Right ventricle myocardium superior (tissue), 1 donor: ENCODE measurements at regions of chr11 and their contacts with region 1.

Region 1: GRCh38 chr11:64317957-64318693 is at the start of gene PRDX5:
- DNase-seq: peak; percentile 98
- ATAC-seq: peak; percentile 92
- total RNA-seq, gene PRDX5: 417 TPM

Region 2: GRCh38 chr11:64102005-64102738 is 216.0 kb before region 1 on chr11:
- intact Hi-C with region 1: no loop called
- DNase-seq: no peak
- ATAC-seq: no peak

Region 3: DNA sequence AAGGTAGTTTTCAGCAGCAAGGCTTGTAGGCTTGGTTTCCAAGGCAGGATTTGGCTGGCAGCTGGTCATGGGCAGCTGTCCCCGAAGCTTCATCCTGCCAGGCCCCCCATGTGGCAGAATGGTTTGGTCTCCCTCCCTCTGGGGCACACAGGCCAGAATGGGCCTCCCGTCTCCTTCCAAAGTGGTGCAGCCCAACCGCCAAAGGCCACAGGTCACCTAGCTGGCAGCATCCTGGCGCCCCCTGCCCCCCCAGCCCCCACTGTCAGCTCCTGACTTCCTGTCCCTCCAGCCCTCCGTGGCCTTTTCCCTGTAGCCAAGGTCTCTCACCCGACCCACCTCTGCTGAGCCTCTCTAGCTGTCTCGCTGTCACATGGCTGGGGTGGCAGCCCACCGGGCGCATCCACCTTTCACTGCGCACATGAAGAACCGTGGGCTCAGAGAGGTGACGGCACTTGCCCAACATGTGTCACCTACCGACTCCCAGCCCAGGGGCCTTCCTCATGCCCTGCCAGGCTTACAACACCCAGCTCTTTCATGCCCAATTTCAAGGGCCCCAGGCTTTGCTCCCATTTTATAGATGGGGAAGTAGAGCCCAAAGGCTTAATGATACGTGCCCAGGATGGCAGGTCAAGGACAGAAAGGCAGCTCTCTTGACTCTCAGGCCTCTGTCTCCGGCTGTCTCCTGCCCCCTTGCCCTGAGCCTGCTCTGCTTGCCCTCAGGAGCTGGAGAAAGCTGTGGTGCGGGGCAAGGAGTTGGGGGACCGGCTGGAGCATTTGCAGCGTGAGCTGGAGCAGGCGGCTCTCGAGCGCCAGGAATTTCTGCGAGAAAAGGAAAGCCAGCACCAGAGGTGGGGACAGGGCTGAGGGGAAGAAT is 30.7 kb after region 1 on chr11:
- intact Hi-C with region 1: no loop called
- DNase-seq: no peak
- ATAC-seq: no peak

Region 4: GRCh38 chr11:64358907-64359711 is 41.0 kb after region 1 on chr11 and contains the start of gene RPS6KA4:
- intact Hi-C with region 1: loop called (anchors 5 kb)
- DNase-seq: peak; percentile 77
- ATAC-seq: peak; percentile 91
- total RNA-seq, gene RPS6KA4: 14.6 TPM